RWPE1 (cell line): ENCODE measurements at regions of chr10 and their contacts with region 1.

Region 1: DNA sequence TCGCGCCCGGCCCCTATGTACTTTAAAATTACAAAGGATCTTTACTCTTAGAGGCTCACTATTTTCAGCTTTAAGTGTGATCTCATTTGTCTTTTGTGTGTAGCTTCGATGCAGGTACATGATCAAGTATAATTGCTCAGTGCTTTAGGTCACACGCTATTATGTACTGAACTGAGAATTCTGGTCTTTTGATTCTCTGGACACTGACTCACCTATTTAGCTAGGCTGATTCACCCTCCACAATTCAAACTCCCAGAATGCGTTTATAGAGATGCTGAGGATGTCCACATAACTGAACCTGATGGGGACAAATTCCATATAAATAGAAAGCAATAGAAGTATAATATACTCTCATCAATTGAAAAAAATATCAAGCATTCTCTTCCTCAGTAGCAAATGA is 57.8 kb downstream of the PRKCQ start:
- DNase-seq: peak; percentile 31
- H3K27ac ChIP-seq: no peak overlapping the region
- CTCF ChIP-seq: no peak

Region 2: DNA sequence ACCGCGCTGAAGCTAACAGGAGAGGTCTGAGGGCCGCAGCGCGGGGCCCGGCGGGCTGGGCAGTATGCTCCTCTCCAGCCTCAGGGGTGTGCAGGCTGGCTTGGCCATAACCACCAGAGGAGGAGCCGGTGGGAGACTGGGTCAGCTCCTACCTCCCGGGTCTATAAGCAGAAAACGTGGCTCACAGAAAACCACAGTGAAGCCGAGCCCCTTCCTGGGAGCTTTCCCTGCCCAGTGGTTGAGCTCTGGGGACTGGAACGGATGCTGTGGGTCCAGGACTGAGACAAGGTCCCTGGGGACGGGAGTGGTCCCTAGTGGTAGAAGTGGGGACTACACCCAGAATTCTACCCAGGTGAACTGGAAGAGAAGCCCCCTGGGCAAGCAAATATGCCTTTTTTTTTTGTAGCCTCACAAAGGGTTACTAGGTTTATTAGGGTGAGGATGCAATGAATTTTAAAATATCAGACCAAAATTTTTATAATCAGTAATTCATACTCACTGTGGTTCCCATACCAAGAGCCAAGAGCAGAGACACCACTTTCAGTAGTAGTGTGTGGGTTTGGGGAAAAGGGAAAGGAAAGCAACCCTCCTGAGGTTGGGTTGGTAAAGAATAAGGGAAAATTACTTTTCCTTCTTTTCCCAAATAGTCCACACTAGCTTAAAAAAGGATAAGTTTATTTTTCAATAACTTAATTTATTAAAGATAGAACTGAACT is 125.7 kb after region 1 on chr10:
- CTCF ChIA-PET with region 1: interaction called, 10 read pairs
- POLR2A ChIA-PET with region 1: no interaction called
- DNase-seq: peak; percentile 69
- H3K27ac ChIP-seq: no peak overlapping the region
- CTCF ChIP-seq: peak; percentile 76

Region 3: DNA sequence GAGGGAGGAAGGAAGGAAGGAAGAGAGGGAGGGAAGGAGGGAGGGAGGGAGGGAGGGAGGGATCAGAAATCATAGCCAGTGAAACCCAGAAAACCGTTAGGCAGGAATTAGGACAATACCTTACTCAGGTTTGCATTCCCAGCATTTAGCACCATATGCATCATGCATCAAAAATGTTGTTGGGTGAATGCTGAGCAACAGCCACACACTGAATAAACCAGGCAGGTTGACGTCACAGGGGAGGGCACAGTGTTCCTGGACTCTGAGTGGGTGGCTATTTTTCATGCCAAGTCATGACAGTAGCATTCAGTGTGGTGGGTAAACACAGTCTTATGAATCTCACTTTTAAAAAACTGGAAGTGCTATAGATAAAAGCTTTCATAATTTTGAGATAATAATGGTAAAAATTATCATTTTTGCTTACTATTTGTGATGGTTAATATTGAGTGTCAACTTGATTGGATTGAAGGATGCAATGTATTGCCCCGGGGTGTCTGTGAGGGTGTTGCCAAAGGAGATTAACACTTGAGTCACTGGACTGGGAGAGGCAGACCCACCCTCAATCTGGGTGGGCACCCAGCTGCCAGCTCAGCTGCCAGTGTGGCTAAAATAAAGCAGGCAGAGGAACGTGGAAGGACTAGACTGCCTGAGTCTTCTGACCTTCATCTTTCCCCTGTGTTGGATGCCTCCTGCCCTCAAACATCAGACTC is 256.9 kb after region 1 on chr10:
- CTCF ChIA-PET with region 1: no interaction called
- POLR2A ChIA-PET with region 1: no interaction called
- DNase-seq: peak; percentile 97
- H3K27ac ChIP-seq: peak overlapping the region; percentile 90
- CTCF ChIP-seq: no peak